Activated CD4-positive, alpha-beta T cell treated with anti-CD3 and anti-CD28 coated beads, Interleukin-2, amount 10 ng/mL, durations not matched to agents 7 days and 5 days (primary cell): ENCODE measurements at regions of chr1 and their contacts with region 1.

Region 1: GRCh38 chr1:32200226-32201010 is at the start of gene CCDC28B:
- DNase-seq: peak; percentile 69
- H3K4me3 Mint-ChIP-seq: peak within 1 kb of the TSS; percentile 81
- H3K27ac Mint-ChIP-seq: peak within 1 kb of the TSS; percentile 88
- H3K4me1 Mint-ChIP-seq: peaks cover 76% of the 10 kb centered on the region
- H3K27me3 Mint-ChIP-seq: no peaks in the 10 kb centered on the region
- total RNA-seq, gene CCDC28B: 33.4 to 36.6 TPM

Region 2: DNA sequence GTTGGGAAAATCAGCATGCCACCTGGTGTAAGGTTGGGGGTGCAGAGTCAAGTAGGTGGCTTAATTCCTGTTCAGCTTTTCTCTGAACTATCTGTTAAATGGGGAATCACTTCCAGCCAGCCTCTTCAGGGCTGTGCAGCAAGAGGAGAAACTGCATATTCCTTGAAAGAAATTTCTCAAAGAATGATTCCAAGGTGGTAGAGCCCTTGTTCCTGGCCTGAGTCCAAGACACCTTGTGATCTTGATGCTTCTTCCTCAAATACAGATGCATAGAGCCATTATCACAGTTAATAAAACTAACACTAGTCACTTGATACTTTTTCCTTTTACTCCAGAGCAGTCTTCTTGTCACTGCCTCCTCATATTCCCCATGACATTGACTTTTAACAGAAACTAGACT is 15.8 kb before region 1 on chr1:
- CTCF ChIA-PET with region 1: interaction called, 12 read pairs
- POLR2A ChIA-PET with region 1: interaction called, 5 read pairs
- DNase-seq: no peak
- H3K4me3 Mint-ChIP-seq: no peak overlapping the region
- H3K27ac Mint-ChIP-seq: peak overlapping the region; percentile 33
- H3K4me1 Mint-ChIP-seq: peaks cover 59% of the 10 kb centered on the region
- H3K27me3 Mint-ChIP-seq: no peaks in the 10 kb centered on the region